ENCODE measurements at regions of chr2 and their contacts with region 1.

Region 1: GRCh38 chr2:218701806-218702205 is 8.8 kb upstream of the TTLL4 start:
- DNase-seq: no peak
- H3K4me3 ChIP-seq: no peak overlapping the region
- H3K27ac ChIP-seq: no peak overlapping the region
- H3K4me1 ChIP-seq: no peaks in the 10 kb centered on the region
- H3K27me3 ChIP-seq: no peaks in the 10 kb centered on the region
- CTCF ChIP-seq: no peak

Region 2: GRCh38 chr2:218671654-218672566 is 29.9 kb before region 1 on chr2 and contains the starts of genes RNF25 and STK36:
- CTCF ChIA-PET with region 1: interaction called, 11 read pairs
- POLR2A ChIA-PET with region 1: no interaction called
- intact Hi-C with region 1: no loop called
- DNase-seq: peak; percentile 96
- H3K4me3 ChIP-seq: peak within 1 kb of the TSS; percentile 75
- H3K27ac ChIP-seq: peak within 1 kb of the TSS; percentile 70
- H3K4me1 ChIP-seq: no peaks in the 10 kb centered on the region
- H3K27me3 ChIP-seq: no peaks in the 10 kb centered on the region
- CTCF ChIP-seq: no peak
- total RNA-seq, gene RNF25: 39.4 TPM in 2 replicates
- total RNA-seq, gene STK36: 69.3 and 73.3 TPM in 2 replicates

Measured in A673 (cell line).